WTC11 (cell line): ENCODE measurements at regions of chr19 and their contacts with region 1.

Region 1: DNA sequence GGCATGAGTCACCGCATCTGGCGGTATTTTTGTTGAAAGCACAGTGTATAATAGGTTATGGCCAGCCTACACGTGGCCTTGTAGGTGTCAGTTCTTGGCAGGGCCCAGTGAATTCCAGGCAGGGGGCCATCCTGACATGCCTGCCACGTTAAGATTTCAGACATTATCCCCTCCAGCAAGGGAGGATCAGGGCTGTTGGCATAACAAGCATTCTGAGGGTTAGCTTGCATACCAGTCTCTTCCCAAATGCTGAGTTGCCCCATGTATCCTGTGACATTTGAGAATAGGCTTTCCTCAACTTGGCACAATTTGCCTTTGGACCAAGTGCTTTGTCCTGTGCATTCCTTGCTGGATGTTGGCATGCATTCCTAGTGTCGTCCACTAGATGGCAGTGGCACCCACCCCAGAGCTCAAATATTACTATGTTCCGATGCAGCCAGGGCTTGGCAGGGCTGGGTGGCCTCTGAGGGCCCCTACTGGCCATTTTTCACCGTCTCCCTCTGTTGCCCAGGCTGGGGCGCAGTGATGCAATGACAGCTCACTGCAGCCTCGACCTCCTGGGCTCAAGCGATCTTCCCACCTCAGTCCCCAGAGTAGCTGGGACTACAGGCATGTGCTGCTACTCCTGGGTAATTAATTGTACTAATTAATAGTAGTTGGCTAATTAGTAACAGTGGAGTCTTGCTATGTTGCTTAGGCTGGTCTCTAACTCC is 31.2 kb downstream of the NLRP12 start:
- DNase-seq: peak; percentile 93
- ATAC-seq: peak; percentile 97
- H3K4me3 Mint-ChIP-seq: no peak overlapping the region
- H3K27ac Mint-ChIP-seq: peak overlapping the region; percentile 79
- H3K4me1 Mint-ChIP-seq: peaks cover 25% of the 10 kb centered on the region
- H3K27me3 Mint-ChIP-seq: 0 out of 2 replicates have a peak, but pooled peaks cover under 1% of the 10 kb centered on the region
- CTCF ChIP-seq: peak; percentile 97

Region 2: GRCh38 chr19:53294786-53295441 is 498.0 kb before region 1 on chr19:
- CTCF ChIA-PET with region 1: no interaction called
- POLR2A ChIA-PET with region 1: no interaction called
- DNase-seq: no peak
- ATAC-seq: peak; percentile 83
- H3K4me3 Mint-ChIP-seq: no peak overlapping the region
- H3K27ac Mint-ChIP-seq: peak overlapping the region; percentile 89
- H3K4me1 Mint-ChIP-seq: no peaks in the 10 kb centered on the region
- H3K27me3 Mint-ChIP-seq: peaks cover 9% of the 10 kb centered on the region
- CTCF ChIP-seq: no peak

Region 3: DNA sequence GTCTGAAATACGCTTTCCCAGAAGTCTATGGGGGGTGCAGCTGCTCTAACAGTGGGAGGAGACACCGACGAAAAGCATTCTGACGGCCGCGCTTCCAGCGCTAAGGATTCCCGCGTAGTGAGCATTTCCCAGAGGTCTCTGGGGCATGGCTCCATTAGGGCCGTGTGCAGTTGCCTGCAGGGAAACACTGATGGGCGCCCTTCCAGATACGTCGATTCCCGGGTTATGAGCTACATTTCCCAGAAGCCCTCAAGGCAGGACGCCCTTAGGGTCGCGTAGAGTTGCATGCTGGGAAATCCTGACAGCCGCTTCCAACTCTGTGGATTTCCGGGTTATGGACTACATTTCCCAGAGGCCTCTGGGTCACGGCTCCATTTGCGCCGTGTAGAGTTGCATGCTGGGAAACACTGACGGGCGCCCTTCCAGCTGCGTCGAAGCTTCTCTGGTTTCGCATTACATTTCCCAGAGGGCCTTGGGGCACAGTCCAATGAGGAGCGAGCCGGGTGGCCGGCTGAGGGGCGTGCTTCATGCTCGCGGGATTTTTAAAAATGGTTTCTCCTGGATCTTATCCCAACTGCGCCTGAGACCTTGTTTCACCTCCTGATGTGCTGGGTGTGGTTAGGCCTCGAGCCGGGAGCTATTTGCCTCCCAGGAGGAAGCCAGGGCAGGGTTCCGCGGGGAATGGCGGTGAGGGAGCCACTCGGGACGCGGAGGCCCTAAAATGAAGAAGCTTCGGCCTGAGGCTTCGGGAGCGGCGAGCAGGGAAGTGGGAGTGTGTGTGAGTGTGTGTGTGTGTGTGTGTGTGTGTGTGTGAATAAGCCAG is 272.1 kb before region 1 on chr19:
- CTCF ChIA-PET with region 1: interaction called, 11 read pairs
- POLR2A ChIA-PET with region 1: no interaction called
- DNase-seq: peak; percentile 94
- ATAC-seq: peak; percentile 96
- H3K4me3 Mint-ChIP-seq: peak overlapping the region; percentile 100
- H3K27ac Mint-ChIP-seq: peak overlapping the region; percentile 98
- H3K4me1 Mint-ChIP-seq: peaks cover 14% of the 10 kb centered on the region
- H3K27me3 Mint-ChIP-seq: no peaks in the 10 kb centered on the region
- CTCF ChIP-seq: no peak

Region 4: DNA sequence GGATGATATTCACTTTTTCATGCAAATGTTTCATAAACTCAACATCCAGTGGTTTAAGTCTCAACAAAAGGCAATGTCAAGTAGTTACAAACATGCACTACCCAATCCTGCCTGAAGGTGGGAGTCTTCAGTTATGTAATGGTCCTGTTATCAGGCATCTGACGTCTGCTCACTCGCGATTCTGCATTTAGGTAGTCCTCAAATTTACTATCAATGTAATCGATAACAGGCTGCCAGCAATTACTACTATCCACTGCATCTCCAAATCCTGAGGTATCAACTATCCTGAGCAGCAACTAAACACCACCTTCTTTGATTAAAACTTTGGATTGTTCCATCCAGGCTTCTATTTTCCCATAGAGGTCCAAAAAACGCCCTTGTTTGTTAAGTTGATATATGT is 19.9 kb before region 1 on chr19:
- CTCF ChIA-PET with region 1: interaction called, 99 read pairs
- POLR2A ChIA-PET with region 1: no interaction called
- DNase-seq: peak; percentile 78
- ATAC-seq: peak; percentile 69
- H3K4me3 Mint-ChIP-seq: peak overlapping the region; percentile 32
- H3K27ac Mint-ChIP-seq: peak overlapping the region; percentile 95
- H3K4me1 Mint-ChIP-seq: peaks cover 54% of the 10 kb centered on the region
- H3K27me3 Mint-ChIP-seq: no peaks in the 10 kb centered on the region
- CTCF ChIP-seq: peak; percentile 62

Region 5: DNA sequence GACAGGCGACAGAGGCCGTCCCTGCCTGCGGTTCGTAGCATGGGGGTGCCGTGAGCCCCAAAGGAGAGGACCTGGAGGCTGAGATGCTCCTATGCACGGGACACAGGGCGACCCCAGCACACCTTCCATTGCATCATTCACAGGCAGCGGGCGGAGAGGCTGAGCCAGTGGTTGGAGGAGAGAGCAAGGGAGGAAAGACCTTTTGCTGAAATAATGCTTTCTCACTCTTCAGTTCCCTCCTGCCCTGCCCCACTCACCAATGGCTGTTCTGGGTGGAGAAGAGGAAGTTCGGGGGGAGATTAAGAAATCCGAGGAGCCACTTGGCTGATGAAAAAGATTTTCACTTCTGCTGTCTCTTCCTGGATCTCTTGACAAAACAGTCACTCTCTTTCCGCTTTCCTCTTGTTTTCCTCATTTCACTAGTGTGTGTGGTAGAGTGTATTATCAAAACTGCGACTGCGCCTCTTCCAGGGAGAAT is 31.3 kb after region 1 on chr19 and contains the start of gene NLRP12:
- CTCF ChIA-PET with region 1: interaction called, 27 read pairs
- POLR2A ChIA-PET with region 1: interaction called, 5 read pairs
- DNase-seq: no peak
- ATAC-seq: peak; percentile 44
- H3K4me3 Mint-ChIP-seq: no peak within 1 kb of the TSS
- H3K27ac Mint-ChIP-seq: peak within 1 kb of the TSS; percentile 84
- H3K4me1 Mint-ChIP-seq: peaks cover 20% of the 10 kb centered on the region
- H3K27me3 Mint-ChIP-seq: no peaks in the 10 kb centered on the region
- CTCF ChIP-seq: no peak
- total RNA-seq, gene NLRP12: 4.7 to 5.6 TPM (median 4.9 TPM) in 3 replicates

Region 6: DNA sequence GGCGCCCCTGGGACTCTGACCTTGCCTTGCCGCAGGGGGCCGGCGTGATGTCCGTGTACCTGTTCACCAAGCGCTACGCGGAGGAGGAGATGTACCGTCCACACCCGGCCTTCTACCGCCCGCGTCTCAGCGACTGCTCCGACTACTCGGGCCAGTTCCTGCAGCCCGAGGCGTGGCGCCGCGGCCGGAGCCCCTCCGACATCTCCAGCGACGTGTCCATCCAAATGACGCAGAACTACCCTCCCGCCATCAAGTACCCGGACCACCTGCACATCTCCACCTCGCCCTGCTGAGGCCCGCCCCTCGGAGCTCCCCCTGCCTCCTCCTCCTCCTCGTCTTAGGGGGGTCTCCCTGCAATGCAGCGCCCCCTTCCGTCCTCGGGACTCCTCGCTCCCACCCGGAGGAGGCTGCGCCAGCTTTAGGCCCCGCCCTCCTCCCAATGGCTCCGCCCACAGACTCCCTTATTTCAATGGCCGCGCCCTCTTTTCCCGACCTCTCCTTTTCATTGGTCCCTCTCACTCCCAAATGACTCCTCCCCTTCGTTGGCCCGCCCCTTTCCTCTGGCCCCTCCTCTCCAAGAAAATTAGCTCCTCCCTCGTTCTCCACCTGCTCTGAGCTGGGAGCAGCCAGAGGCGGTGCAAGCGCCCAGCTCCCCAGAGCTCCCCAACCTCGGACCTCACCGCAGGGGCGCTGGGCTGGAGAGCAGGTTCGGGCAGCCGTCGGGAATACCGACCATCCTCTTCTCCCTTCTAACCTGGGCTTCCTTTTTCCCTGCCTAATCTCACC is 149.3 kb after region 1 on chr19:
- CTCF ChIA-PET with region 1: interaction called, 23 read pairs
- POLR2A ChIA-PET with region 1: interaction called, 4 read pairs
- DNase-seq: peak; percentile 100
- ATAC-seq: peak; percentile 92
- H3K4me3 Mint-ChIP-seq: peak overlapping the region; percentile 95
- H3K27ac Mint-ChIP-seq: 0 out of 2 replicates have a peak overlapping the region, but pooled peaks have one; percentile 83
- H3K4me1 Mint-ChIP-seq: peaks cover 32% of the 10 kb centered on the region
- H3K27me3 Mint-ChIP-seq: no peaks in the 10 kb centered on the region; the same call in 1 of the 2 replicates
- CTCF ChIP-seq: peak; percentile 88

Region 7: GRCh38 chr19:54023191-54023590 is 230.3 kb after region 1 on chr19:
- CTCF ChIA-PET with region 1: interaction called, 21 read pairs
- POLR2A ChIA-PET with region 1: interaction called, 4 read pairs
- DNase-seq: no peak
- ATAC-seq: no peak
- H3K4me3 Mint-ChIP-seq: no peak overlapping the region
- H3K27ac Mint-ChIP-seq: no peak overlapping the region
- H3K4me1 Mint-ChIP-seq: peaks cover 14% of the 10 kb centered on the region
- H3K27me3 Mint-ChIP-seq: peaks cover 14% of the 10 kb centered on the region
- CTCF ChIP-seq: no peak

Region 8: DNA sequence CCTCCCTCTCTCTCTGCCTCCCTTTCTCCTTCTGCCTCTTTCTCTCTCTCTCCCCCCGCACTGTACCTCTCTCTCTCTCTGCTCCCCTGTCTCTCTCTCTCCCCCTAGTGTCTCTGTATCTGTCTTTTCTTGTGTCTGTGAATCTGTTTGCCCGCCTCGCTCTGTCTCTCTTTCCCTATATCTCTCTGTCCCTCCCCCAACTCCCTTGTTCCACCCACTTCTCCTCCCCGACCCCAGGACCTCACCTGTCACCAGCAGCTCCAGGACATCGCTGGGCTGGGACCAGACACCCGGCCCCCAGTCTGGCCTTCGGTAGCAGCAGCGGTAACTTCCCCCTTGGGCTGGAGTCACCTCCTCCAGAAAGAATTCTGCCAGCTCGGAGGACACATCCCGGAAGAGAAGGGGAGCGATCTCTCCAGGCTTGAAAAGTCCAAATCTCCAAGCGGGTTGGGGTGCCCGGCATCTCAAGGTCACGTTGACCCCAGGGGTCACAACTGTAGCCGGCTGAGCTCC is 303.8 kb after region 1 on chr19:
- CTCF ChIA-PET with region 1: interaction called, 11 read pairs
- POLR2A ChIA-PET with region 1: no interaction called
- DNase-seq: peak; percentile 44
- ATAC-seq: peak; percentile 64
- H3K4me3 Mint-ChIP-seq: peak overlapping the region; percentile 77
- H3K27ac Mint-ChIP-seq: no peak overlapping the region
- H3K4me1 Mint-ChIP-seq: peaks cover 5% of the 10 kb centered on the region
- H3K27me3 Mint-ChIP-seq: peaks cover 34% of the 10 kb centered on the region
- CTCF ChIP-seq: no peak